ENCODE measurements at regions of chr10 and their contacts with region 1.

Region 1: DNA sequence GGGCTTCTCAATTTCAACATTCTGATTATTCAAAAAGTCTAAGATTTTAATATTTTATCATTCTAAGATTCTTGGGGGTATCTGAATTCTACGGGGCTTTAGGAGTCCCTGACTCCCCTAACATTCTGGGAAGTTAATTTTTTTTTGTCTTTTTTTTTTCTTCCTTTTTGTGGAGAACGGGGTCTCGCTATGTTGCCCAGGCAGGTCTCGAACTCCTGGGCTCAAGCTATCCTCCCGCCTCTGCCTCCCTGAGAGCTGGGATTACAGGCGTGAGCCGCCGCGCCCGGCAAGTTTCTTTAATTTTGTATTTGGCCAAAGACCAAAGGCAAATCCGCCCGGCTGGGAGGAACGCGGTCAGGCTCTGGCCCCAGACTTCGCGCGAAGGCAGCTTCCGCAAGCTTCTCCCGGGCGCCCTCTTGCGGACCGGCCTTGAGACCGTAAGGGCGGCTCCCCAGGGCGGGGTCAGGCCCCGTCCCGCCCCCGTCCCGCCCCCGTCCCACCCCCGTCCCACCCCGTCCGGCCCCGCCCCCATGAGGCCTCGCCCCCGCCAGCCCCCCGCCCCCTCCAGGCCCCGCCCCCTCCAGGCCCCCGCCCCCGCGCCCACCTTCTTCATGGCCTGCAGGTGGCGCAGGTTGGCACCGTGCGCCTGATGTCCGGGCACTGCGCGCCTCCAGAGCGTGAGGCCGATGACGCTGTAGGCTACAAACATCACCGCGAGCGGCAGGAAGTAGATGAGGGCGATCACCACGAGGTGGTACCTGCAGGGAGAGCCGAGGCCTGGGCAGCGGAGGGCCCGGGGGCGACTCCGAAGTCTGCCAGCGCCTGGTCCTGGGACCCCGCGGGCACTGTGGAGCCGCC is 8.2 kb downstream of the TACR2 start:
- H3K4me3 ChIP-seq: no peak overlapping the region
- H3K27ac ChIP-seq: no peak overlapping the region
- H3K4me1 ChIP-seq: no peaks in the 10 kb centered on the region; the same call in 1 of the 2 replicates
- CTCF ChIP-seq: peak; percentile 81

Region 2: DNA sequence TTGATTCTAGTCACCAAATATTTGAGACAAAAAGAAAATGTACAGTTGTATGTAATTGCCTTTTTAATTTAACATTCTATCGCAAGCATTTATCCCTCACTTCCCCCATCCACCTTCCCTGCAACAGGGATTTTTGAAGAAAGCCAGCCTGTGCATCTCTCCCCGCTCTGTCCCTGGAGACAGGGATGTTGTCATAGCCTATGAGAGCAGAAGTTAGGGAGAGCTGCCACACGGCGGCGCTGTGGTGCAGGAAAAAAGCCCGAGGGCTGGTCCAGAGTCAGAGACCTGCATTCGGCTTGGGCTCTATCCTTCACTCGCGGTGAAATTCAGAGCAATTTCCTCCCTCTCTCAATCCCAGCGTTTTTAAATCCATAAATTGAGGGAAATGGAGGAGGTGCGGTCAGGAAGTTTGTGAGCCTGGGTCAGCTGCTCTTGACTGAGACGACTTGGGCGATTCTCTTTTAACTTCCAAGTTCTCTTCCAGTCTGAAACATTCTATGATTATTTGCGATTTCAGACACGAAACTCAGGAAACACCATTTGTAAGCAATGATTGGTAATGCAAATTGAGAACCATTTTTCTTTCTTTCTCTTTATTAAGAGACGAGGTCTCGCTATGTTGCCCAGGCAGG is 170.9 kb before region 1 on chr10:
- CTCF ChIA-PET with region 1: interaction called, 22 read pairs
- POLR2A ChIA-PET with region 1: no interaction called
- H3K4me3 ChIP-seq: no peak overlapping the region
- H3K27ac ChIP-seq: no peak overlapping the region
- H3K4me1 ChIP-seq: no peaks in the 10 kb centered on the region
- CTCF ChIP-seq: peak; percentile 79

Region 3: DNA sequence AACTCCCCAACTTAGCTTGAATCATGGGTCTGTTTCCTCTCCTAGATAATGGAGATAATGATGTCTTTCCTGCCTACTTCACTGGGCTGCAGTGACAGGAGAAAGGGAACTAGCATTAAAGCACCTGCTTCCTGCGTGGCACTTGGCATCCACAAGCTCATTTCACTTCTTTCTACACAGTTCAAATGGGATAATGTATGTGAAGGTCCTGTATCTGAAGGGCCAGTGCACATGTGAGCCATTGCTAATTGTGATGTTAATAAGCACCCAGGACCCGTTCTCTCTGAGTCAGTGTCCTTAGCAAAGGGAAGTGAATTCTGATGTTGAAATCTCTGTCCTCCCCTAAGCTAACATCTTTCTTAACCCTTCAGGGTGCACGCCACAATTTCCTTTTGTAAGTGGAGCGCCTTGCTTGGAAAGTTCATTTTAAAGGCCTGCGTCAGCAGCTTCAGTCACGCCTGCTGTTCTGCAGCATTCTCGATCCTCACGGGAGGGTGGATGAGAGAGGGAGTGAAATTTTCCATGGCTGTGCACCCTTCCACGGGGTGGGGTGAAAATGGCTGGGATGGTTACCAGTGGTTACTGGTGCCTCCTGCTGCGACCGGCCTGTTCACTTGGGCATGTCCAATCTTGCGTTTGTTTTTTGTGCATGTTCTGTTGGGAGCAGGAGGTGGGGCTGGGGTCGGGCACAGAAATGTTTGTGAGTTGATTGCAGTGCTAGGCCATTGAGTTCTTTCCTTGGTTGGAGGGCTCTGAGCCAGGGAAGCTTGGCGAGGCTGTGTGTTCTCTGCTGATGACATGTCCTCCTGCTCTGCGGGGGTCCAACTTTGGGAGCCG is 71.0 kb before region 1 on chr10:
- CTCF ChIA-PET with region 1: no interaction called
- POLR2A ChIA-PET with region 1: no interaction called
- H3K4me3 ChIP-seq: no peak overlapping the region
- H3K27ac ChIP-seq: peak overlapping the region; percentile 8; the same call in 1 of the 2 replicates
- H3K4me1 ChIP-seq: peaks cover 6% of the 10 kb centered on the region
- CTCF ChIP-seq: no peak

Region 4: GRCh38 chr10:69397972-69398371 is 10.6 kb before region 1 on chr10:
- CTCF ChIA-PET with region 1: interaction called, 12 read pairs
- POLR2A ChIA-PET with region 1: no interaction called
- H3K4me3 ChIP-seq: no peak overlapping the region
- H3K27ac ChIP-seq: no peak overlapping the region
- H3K4me1 ChIP-seq: no peaks in the 10 kb centered on the region
- CTCF ChIP-seq: no peak

Region 5: DNA sequence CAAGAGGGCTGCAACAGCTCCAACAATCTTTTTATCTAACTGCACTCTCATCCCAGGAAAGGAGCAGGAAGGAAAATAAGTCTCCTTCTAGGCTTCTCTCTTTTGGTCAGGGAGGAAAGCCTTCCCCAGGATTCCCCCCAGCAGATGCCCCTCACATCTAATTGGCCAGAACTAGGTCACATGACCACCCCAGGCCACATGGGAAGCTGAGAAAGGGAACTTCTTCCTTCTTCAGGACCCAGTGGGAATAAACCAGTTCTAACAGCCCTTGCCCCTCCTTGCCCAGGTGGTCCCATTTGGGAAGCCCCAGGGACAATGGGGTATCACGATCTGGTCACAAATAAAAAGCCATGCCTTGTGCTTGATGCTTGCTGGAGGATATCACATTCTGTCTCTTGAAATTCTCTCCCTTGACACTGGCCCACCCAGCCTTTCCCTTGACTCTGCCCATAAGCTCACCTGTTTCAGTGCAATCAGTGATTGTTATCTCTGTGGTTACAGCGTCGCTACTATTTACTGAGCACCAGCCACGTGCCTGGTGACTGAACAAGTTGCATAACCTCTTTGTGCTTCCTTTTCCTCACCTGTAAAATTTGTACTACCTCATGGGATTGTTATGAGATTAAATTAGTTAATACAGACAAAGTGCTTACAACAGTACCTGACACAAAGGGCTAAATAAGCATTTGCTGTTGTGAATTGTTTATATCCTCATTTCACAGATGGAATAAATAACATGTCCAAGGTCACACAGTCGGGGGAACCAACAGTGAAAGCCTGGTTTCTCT is 17.2 kb after region 1 on chr10:
- CTCF ChIA-PET with region 1: interaction called, 12 read pairs
- POLR2A ChIA-PET with region 1: no interaction called
- H3K4me3 ChIP-seq: no peak overlapping the region
- H3K27ac ChIP-seq: no peak overlapping the region
- H3K4me1 ChIP-seq: no peaks in the 10 kb centered on the region; the same call in 1 of the 2 replicates
- CTCF ChIP-seq: no peak

Region 6: DNA sequence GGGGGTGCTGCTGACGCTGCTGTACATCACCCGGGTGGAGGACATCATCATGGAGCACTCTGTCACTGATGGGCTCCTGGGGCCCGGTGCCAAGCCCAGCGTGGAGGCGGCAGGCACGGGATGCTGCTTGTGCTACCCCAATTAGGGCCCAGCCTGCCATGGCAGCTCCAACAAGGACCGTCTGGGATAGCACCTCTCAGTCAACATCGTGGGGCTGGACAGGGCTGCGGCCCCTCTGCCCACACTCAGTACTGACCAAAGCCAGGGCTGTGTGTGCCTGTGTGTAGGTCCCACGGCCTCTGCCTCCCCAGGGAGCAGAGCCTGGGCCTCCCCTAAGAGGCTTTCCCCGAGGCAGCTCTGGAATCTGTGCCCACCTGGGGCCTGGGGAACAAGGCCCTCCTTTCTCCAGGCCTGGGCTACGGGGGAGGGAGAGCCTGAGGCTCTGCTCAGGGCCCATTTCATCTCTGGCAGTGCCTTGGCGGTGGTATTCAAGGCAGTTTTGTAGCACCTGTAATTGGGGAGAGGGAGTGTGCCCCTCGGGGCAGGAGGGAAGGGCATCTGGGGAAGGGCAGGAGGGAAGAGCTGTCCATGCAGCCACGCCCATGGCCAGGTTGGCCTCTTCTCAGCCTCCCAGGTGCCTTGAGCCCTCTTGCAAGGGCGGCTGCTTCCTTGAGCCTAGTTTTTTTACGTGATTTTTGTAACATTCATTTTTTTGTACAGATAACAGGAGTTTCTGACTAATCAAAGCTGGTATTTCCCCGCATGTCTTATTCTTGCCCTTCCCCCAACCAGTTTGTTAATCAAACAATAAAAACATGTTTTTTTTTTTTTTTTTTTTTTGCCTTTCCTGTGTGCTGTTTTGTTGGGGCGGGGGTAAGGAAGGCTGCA is 98.5 kb after region 1 on chr10:
- CTCF ChIA-PET with region 1: interaction called, 28 read pairs
- POLR2A ChIA-PET with region 1: no interaction called
- H3K4me3 ChIP-seq: no peak overlapping the region
- H3K27ac ChIP-seq: no peak overlapping the region
- H3K4me1 ChIP-seq: no peaks in the 10 kb centered on the region
- CTCF ChIP-seq: no peak

Region 7: DNA sequence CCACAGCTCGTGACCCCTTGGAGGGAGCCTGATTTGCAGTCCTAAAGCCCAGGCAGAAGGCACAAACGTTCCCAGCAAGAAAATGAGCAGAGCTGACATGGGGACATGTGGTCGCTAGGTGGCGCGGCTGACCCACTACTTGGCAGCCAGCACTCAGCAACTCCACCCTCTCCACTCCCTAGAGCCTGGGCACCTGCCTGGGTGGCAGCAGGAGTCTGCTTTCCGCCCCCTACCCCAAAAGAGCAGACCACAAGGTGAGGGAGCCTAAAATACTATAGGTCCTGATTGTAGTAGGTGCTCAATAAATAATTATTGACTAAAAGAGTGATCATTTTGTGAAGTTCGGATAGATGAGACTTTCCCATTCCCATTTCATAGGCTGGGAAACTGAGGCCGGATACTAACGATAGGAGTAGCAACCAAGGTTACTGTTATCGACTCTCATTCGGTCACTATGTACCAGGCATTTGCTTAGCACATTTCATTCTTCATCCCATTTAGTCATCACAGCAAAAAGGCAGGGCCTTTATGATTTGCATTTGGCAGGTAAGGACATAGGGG is 107.2 kb after region 1 on chr10:
- CTCF ChIA-PET with region 1: interaction called, 11 read pairs
- POLR2A ChIA-PET with region 1: interaction called, 3 read pairs
- H3K4me3 ChIP-seq: no peak overlapping the region
- H3K27ac ChIP-seq: no peak overlapping the region
- H3K4me1 ChIP-seq: no peaks in the 10 kb centered on the region
- CTCF ChIP-seq: peak; percentile 84

Region 8: DNA sequence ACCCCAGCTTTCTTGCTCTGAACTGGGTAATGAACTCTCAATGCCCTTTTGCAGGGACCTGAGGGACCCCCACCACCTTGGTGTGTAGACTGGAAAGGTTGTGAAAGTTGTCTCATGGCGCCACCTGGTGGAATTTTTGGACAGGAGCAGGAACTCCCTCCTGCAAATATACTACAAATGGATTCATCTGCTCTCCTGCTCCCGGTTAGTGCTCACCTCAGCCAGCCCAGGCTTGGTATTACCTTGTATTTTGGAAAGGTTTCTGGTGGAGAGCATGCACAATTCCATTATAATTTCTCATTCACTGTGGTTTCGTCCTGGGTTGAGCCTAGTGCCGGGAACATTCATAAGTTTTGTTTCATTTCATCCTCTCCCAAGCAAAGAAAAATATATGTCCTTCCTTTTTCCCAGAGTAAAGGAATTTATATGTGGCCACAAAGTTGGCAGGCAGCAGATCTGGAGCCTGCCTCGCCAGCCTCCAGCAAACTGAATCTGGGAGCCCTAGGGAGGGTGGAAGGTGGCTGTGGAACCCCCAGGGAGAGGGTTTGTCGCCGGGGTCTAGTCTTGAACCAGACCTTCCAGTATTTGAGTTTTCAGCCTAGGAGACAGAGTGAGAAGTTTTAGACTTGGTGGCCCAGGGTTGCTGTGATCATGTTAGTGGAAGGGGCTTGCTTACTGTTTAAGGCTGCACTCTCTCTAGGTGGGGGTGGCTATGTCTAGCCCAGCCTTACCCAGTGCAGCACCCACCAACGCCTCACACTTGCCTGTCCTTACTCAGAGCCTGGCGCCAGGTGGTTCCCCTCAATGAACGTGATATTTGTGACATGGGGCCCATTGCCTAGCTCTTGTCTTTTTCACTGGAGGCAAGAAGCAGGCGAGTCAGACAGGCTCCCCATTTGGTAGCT is 231.0 kb after region 1 on chr10:
- CTCF ChIA-PET with region 1: interaction called, 16 read pairs
- POLR2A ChIA-PET with region 1: no interaction called
- H3K4me3 ChIP-seq: no peak overlapping the region
- H3K27ac ChIP-seq: no peak overlapping the region
- H3K4me1 ChIP-seq: no peaks in the 10 kb centered on the region
- CTCF ChIP-seq: peak; percentile 66